Activated naive CD4-positive, alpha-beta T cell treated with anti-CD3 and anti-CD28 coated beads for 36 hours (primary cell): ENCODE measurements at regions of chr11 and their contacts with region 1.

Region 1: GRCh38 chr11:9748361-9748970 is 84.6 kb downstream of the SWAP70 start:
- DNase-seq: peak; percentile 77
- H3K4me3 Mint-ChIP-seq: no peak overlapping the region
- H3K27ac Mint-ChIP-seq: no peak overlapping the region
- H3K4me1 Mint-ChIP-seq: peaks cover 8% of the 10 kb centered on the region
- H3K27me3 Mint-ChIP-seq: no peaks in the 10 kb centered on the region

Region 2: GRCh38 chr11:9601037-9601875 is 147.2 kb before region 1 on chr11:
- CTCF ChIA-PET with region 1: interaction called, 33 read pairs
- intact Hi-C with region 1: no loop called
- DNase-seq: peak; percentile 90
- H3K4me3 Mint-ChIP-seq: peak overlapping the region; percentile 67
- H3K27ac Mint-ChIP-seq: peak overlapping the region; percentile 84
- H3K4me1 Mint-ChIP-seq: peaks cover 27% of the 10 kb centered on the region
- H3K27me3 Mint-ChIP-seq: peaks cover 2% of the 10 kb centered on the region

Region 3: DNA sequence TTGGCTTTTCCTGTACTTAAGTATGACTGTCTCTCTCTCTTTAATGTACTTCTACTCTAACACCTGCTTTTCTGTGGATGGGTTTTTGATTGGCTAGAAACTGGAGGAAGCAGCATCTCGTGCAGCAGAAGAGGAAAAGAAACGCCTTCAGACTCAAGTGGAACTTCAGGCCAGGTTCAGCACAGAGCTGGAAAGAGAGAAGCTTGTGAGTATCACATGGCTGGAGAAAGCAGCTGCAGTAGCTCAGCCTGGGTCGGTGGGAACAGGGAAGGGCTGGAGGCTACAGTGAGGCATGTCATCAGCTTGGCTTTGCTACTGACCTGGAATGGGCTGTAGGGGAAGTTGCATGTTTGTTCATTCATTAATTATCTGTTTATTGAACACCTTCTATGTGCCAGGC is 10.3 kb before region 1 on chr11:
- CTCF ChIA-PET with region 1: interaction called, 10 read pairs
- intact Hi-C with region 1: no loop called
- DNase-seq: no peak
- H3K4me3 Mint-ChIP-seq: no peak overlapping the region
- H3K27ac Mint-ChIP-seq: no peak overlapping the region
- H3K4me1 Mint-ChIP-seq: no peaks in the 10 kb centered on the region
- H3K27me3 Mint-ChIP-seq: no peaks in the 10 kb centered on the region

Region 4: DNA sequence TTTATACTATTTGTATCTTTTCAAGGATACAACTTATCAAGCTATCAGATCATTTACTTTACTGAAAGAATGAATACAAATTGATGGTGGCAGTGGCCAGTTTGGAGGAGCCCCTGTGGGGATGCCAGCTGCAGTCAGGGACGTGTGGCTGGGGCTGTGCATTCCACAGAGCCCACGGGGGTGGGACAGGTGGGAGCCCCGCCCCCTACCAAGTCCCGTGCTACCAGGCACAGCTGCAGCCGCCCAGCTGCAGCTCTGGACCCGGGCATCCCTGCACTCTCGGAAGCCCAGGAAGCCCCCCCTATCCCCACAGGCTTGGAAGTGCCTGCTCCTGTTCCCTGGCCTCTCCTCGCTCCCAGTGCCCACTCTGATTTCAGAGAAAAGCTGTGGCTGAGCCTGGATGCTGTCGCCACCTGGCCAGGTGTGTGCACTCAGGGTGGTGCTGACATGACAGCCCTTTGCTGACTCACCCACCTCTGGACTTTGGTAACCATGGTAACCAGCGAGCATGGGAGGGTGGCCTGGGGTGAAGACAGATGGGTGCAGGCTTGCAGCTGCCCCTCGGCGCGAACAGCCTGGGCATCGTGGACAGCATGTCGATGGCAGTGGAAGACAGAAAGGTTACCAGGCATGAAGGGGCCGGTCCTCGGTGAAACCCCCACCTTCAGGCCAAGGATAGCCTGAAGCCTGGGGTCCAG is 407.5 kb after region 1 on chr11:
- CTCF ChIA-PET with region 1: no interaction called
- intact Hi-C with region 1: no loop called
- DNase-seq: no peak
- H3K4me3 Mint-ChIP-seq: no peak overlapping the region
- H3K27ac Mint-ChIP-seq: no peak overlapping the region
- H3K4me1 Mint-ChIP-seq: peaks cover 3% of the 10 kb centered on the region
- H3K27me3 Mint-ChIP-seq: no peaks in the 10 kb centered on the region